Lower leg skin (tissue), 4 donors: ENCODE measurements at regions of chr1 and their contacts with region 1.

Region 1: GRCh38 chr1:232648316-232648715 is 18.4 kb upstream of the SIPA1L2 start:
- DNase-seq: no peak
- H3K4me3 ChIP-seq: no peak overlapping the region
- CTCF ChIP-seq: no peak
- POLR2A ChIP-seq: no peak

Region 2: DNA sequence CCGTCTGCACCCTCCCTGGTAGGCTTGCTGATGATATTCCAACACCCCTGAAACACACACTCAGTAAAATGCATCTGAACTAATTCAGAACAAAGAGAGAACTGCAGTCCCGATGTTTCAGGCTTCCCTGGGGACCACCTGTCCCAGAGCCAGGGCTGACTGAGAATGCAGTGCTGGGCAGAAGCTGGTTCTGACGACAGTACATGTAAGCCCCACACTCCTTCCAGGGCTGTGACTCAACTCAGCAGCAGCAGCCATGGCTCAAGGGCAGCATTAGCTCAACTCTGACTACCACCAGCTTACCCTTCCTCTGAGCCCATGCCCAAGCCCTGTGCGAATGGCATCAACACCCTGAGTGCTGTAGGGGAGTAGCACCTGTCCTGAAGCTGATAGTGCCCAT is 38.0 kb after region 1 on chr1:
- intact Hi-C with region 1: loop called (anchors 2 kb)
- DNase-seq: no peak
- H3K4me3 ChIP-seq: no peak overlapping the region
- CTCF ChIP-seq: no peak
- POLR2A ChIP-seq: no peak